PC-3 (cell line): ENCODE measurements at regions of chr10 and their contacts with region 1.

Region 1: DNA sequence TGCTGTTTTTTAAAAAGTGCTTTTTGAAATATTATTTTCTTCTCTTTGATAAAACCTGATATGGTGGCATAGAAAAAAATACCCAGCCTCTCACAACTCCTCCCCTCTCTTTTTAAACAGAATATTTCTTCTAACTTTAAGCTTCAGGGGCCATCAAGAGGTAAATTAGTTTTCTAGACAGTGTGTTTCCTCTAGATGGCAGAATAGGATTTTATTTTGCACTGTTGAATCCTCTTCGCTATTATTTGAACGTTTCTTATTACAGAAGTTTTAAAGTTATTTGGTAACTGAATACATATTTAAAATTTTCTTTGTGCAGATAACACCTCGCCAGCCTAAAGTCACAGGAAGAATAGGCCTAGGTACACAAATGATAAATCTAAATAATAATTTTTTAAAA is 30.3 kb downstream of the ARL5B start:
- DNase-seq: peak; percentile 54
- ATAC-seq: peak; percentile 78
- H3K4me3 ChIP-seq: no peak overlapping the region
- H3K27ac ChIP-seq: no peak overlapping the region
- H3K4me1 ChIP-seq: no peaks in the 10 kb centered on the region
- H3K27me3 ChIP-seq: no peaks in the 10 kb centered on the region
- CTCF ChIP-seq: peak; percentile 74

Region 2: GRCh38 chr10:18793951-18794350 is 104.5 kb after region 1 on chr10:
- CTCF ChIA-PET with region 1: no interaction called
- POLR2A ChIA-PET with region 1: no interaction called
- intact Hi-C with region 1: loop called (anchors 1 kb)
- DNase-seq: peak; percentile 44
- ATAC-seq: peak; percentile 33; the same call in 1 of the 2 replicates
- H3K4me3 ChIP-seq: no peak overlapping the region
- H3K27ac ChIP-seq: no peak overlapping the region
- H3K4me1 ChIP-seq: no peaks in the 10 kb centered on the region
- H3K27me3 ChIP-seq: no peaks in the 10 kb centered on the region
- CTCF ChIP-seq: peak; percentile 63